H1 (cell line): ENCODE measurements at regions of chr9 and their contacts with region 1.

Region 1: GRCh38 chr9:137070201-137070905 is at the start of gene SAPCD2:
- DNase-seq: peak; percentile 75 to 84
- H3K4me3 ChIP-seq: peak within 1 kb of the TSS; percentile 46 to 64 (median 48)
- H3K27ac ChIP-seq: no peak within 1 kb of the TSS; the same call in 1 of the 2 replicates
- H3K4me1 ChIP-seq: peaks cover 0 to 27% (median 21%) of the 10 kb centered on the region in 4 experiments; a peak in 6 of 7 replicates
- H3K27me3 ChIP-seq: peaks cover 0 to 18% (median 7%) of the 10 kb centered on the region in 4 experiments; a peak in 5 of 7 replicates
- CTCF ChIP-seq: no peak
- EP300 ChIP-seq: 0 out of 3 replicates have a peak, but pooled peaks of 1 of the 2 experiments have one; percentile 18
- POLR2A ChIP-seq: peak in 1 of 2 experiments; percentile 49; a peak in 1 of 3 replicates
- RAD21 ChIP-seq: no peak
- total RNA-seq, gene SAPCD2: 30.3 and 32.1 TPM in 2 replicates

Region 2: DNA sequence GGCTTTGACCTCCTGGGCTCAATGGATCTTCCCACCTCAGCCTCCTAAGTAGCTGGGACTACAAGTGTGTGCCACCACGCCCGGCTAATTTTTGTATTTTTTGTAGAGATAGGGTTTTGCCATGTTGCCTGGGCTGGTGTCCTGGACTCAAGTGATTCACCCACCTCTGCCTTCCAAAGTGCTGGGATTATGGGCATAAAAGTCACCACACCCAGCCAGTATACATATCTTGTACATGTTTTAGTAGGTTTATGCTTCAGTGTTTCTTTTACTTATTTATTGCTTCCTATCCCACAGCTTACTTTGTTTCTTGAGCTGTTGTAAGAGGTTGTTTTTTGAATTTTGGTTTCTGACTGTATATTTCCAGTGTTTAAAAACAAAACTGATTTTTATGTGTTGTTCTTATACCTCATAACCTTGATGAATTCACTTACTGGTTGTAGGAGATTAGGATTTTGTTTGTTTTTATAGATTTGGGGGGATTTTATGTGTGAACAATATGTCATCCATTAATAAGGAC is 138.7 kb before region 1 on chr9:
- CTCF ChIA-PET with region 1: no interaction called
- POLR2A ChIA-PET with region 1: no interaction called
- DNase-seq: no peak
- H3K4me3 ChIP-seq: no peak overlapping the region
- H3K27ac ChIP-seq: no peak overlapping the region
- H3K4me1 ChIP-seq: peaks cover 0 to 6% (median 0%) of the 10 kb centered on the region in 4 experiments; a peak in 2 of 7 replicates
- H3K27me3 ChIP-seq: no peaks in the 10 kb centered on the region
- CTCF ChIP-seq: no peak
- EP300 ChIP-seq: no peak
- POLR2A ChIP-seq: no peak
- RAD21 ChIP-seq: no peak

Region 3: GRCh38 chr9:137046098-137046787 is 24.1 kb before region 1 on chr9 and contains the start of gene NPDC1:
- CTCF ChIA-PET with region 1: interaction called, 291 read pairs
- POLR2A ChIA-PET with region 1: interaction called, 4 read pairs
- DNase-seq: peak; percentile 59 to 99
- H3K4me3 ChIP-seq: peak within 1 kb of the TSS; percentile 38 to 62 (median 56)
- H3K27ac ChIP-seq: no peak within 1 kb of the TSS
- H3K4me1 ChIP-seq: peaks cover 3 to 14% (median 8%) of the 10 kb centered on the region in 4 experiments; a peak in 6 of 7 replicates
- H3K27me3 ChIP-seq: peaks cover 17 to 51% (median 37%) of the 10 kb centered on the region in 4 experiments
- CTCF ChIP-seq: peak in 2 of 3 experiments; percentile 85 to 94; a peak in 3 of 4 replicates
- EP300 ChIP-seq: peak in 1 of 2 experiments; percentile 56; a peak in 1 of 3 replicates
- POLR2A ChIP-seq: no peak
- RAD21 ChIP-seq: peak; percentile 63 to 76
- total RNA-seq, gene NPDC1: 41.9 and 44.1 TPM in 2 replicates

Region 4: DNA sequence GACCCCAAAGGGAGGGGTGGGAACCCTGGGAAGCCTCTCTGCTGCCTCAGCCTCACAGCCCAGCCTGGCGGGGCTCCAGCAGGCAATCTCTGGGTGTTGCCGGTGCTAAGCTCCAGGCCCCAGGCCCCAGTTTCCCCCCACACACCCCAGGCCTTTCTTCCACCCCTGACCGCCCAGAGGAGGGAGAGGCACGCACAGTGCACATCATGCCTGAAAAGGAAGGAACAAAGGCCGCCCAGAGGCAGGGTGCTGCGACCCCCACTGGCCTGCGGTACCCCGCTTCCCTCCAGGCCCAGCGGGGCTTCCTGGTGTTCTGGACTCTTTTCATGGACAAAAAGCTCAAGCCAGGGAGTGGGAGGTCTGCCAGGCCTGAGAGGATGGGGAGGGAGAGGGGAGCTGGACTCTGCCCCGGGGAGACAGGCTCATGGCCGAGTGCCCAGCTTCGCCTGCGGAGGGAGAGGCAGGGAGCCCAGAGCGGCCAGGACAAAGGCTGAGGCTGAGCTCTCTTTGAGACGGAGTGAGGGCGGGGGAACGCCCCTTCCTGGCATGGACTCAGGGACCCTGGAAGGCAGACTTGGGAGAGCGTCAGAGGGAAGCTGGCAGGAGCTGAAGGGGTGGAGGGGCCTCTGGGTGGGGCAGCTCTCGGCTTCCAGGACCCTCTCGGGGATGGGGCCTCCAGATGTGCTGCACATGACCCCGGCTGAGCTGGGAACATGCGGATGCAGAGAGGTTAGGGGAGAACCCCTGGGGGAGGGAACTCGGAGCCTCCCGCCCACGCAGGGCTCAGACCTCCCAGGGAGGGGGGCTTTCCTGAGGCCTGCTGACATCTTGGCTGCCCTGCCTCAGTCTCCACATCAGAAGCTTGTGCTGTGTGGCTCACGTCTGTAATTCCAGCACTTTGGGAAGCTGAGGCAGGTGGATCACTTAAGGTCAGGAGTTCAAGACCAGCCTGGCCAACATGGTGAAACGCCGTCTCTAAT is 14.7 kb before region 1 on chr9:
- CTCF ChIA-PET with region 1: interaction called, 291 read pairs
- POLR2A ChIA-PET with region 1: interaction called, 5 read pairs
- DNase-seq: no peak
- H3K4me3 ChIP-seq: no peak overlapping the region
- H3K27ac ChIP-seq: no peak overlapping the region
- H3K4me1 ChIP-seq: peaks cover 0 to 18% (median 11%) of the 10 kb centered on the region in 4 experiments; a peak in 5 of 7 replicates
- H3K27me3 ChIP-seq: peaks cover 10 to 45% (median 36%) of the 10 kb centered on the region in 4 experiments
- CTCF ChIP-seq: no peak
- EP300 ChIP-seq: no peak
- POLR2A ChIP-seq: no peak
- RAD21 ChIP-seq: no peak

Region 5: DNA sequence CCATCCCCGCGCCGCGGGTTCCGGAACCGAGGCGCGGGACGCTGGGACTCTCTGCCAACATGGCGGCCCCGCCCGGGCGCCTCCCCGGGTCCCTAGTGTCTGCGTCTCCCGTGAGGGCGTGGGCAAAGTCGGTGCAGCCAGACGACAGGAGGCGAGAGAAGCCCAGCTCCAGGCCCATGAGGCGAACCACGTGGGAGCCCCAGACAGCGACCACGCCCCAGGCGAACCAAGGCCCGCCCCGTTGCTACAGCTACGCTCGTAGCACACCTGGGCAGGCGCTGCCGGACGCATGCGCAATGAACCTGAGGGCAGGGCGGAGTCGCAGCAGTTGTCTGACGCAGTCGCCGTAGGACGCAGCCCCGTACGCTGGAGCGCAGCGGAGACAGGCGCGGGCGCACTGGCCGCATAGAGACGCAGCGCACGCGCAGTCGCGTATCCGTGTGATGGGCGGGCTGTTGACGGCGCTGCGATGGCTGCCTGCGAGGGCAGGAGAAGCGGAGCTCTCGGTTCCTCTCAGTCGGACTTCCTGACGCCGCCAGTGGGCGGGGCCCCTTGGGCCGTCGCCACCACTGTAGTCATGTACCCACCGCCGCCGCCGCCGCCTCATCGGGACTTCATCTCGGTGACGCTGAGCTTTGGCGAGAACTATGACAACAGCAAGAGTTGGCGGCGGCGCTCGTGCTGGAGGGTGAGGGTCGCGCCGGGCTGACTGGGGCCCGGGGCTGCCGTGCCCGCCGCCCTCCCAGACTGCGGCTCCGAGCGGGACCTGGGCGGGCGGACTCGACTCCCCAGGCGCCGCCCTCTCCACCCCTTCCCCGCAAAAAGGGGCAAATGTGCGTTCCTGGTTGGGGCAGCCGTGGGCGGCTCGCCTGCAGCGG is 16.4 kb after region 1 on chr9 and contains the start of gene MAN1B1:
- CTCF ChIA-PET with region 1: interaction called, 80 read pairs
- POLR2A ChIA-PET with region 1: interaction called, 9 read pairs
- DNase-seq: peak; percentile 97 to 99
- H3K4me3 ChIP-seq: peak within 1 kb of the TSS; percentile 55 to 81 (median 71)
- H3K27ac ChIP-seq: no peak within 1 kb of the TSS
- H3K4me1 ChIP-seq: peaks cover 0 to 10% (median 4%) of the 10 kb centered on the region in 4 experiments; a peak in 4 of 7 replicates
- H3K27me3 ChIP-seq: peaks cover 0 to 11% (median 3%) of the 10 kb centered on the region in 4 experiments; a peak in 5 of 7 replicates
- CTCF ChIP-seq: peak in 1 of 3 experiments; percentile 6; a peak in 1 of 4 replicates
- EP300 ChIP-seq: no peak
- POLR2A ChIP-seq: peak in 1 of 2 experiments; percentile 73; a peak in 1 of 3 replicates
- RAD21 ChIP-seq: no peak
- total RNA-seq, gene MAN1B1: 35.1 and 36.3 TPM in 2 replicates

Region 6: GRCh38 chr9:137390543-137391410 is 320.4 kb after region 1 on chr9:
- CTCF ChIA-PET with region 1: no interaction called
- POLR2A ChIA-PET with region 1: no interaction called
- DNase-seq: no peak
- H3K4me3 ChIP-seq: no peak overlapping the region
- H3K27ac ChIP-seq: no peak overlapping the region
- H3K4me1 ChIP-seq: no peaks in the 10 kb centered on the region; a peak in 1 of 7 replicates
- H3K27me3 ChIP-seq: no peaks in the 10 kb centered on the region
- CTCF ChIP-seq: no peak
- EP300 ChIP-seq: no peak
- POLR2A ChIP-seq: no peak
- RAD21 ChIP-seq: no peak